ENCODE measurements at regions of chr19 and their contacts with region 1.

Region 1: DNA sequence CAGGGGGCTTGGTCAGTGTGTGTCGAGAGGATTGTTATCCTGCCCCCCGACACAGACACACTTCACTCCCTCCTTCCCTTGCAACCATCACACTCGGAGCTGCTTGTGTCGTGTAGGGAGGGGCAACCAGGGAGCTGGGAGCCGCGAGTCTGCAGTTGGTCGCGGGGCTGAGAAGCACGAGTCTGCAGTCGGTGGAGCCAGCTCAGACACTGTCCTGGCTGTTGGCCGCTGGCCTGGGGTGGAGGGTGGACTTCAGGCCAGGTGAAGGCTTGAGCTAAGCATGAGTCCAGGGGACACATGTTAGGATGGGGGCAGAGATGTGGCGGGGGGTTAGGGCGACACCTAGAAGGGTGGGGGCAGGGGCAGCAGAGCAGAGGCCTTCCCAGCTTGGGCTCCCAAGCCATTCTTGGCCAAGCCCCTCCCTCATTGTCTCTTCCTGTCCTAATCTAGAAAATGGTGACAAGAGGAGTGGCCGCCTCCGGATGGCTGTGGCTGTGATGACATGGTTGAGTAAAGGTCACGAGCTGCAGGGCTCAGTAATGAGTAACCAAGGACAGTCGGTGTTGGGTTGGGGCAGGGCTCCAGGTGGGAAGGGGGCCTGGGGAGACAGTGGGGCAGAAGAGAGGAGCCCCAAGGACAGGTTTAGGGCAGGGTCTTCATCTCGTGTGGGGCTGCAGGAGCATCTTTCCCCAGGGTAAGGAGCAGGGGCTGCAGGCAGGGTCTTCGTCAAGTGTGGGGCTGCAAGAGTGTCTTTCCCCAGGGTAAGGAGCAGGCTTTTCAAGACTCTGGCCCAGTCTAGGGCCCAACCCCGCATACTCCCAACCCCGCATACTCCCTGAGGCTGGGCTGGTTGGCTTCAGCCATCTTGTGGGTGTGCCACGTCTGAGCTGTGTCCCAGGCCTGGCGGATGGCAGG is 8.6 kb downstream of the PPP5C start:
- DNase-seq: peak in 1 of 2 experiments; percentile 21
- ATAC-seq: peak in 1 of 2 experiments; percentile 31; a peak in 3 of 6 replicates
- H3K4me3 ChIP-seq: no peak overlapping the region
- H3K27ac ChIP-seq: peak overlapping the region in 1 of 2 experiments; percentile 45; a peak in 3 of 6 replicates
- H3K4me1 ChIP-seq: peaks cover 44% of the 10 kb centered on the region
- CTCF ChIP-seq: no peak
- EP300 ChIP-seq: no peak
- POLR2A ChIP-seq: no peak
- RAD21 ChIP-seq: no peak

Region 2: DNA sequence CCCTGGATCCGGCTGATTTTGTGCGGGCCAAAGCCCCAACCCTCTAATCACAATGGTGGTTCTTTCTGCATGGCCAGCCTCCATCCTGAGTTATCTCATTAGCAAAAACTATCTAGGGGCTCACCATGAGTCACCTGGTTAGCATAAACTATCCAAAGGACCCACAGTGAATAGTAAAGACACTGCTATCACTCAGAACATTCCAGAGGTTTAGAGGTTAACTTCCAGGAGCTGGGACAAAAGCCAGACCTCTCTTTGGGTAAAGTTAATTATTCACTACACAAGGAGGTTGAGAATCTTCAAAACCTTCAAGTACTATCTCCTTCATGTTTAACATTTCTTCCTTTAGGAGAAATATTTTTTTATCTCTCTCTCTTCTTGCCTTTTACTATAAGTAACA is 27.4 kb before region 1 on chr19:
- CTCF ChIA-PET with region 1: no interaction called
- POLR2A ChIA-PET with region 1: no interaction called
- DNase-seq: no peak
- ATAC-seq: 0 out of 6 replicates have a peak, but pooled peaks of 1 of the 2 experiments have one; percentile 30
- H3K4me3 ChIP-seq: no peak overlapping the region
- H3K27ac ChIP-seq: no peak overlapping the region
- H3K4me1 ChIP-seq: no peaks in the 10 kb centered on the region
- CTCF ChIP-seq: no peak
- EP300 ChIP-seq: no peak
- POLR2A ChIP-seq: no peak
- RAD21 ChIP-seq: no peak

Region 3: GRCh38 chr19:46368116-46368515 is 12.6 kb after region 1 on chr19:
- CTCF ChIA-PET with region 1: interaction called, 45 read pairs
- POLR2A ChIA-PET with region 1: no interaction called
- DNase-seq: no peak
- ATAC-seq: no peak
- H3K4me3 ChIP-seq: no peak overlapping the region
- H3K27ac ChIP-seq: no peak overlapping the region
- H3K4me1 ChIP-seq: peaks cover 22% of the 10 kb centered on the region
- CTCF ChIP-seq: no peak
- EP300 ChIP-seq: no peak
- POLR2A ChIP-seq: no peak
- RAD21 ChIP-seq: no peak

Region 4: GRCh38 chr19:46373421-46374359 is 18.2 kb after region 1 on chr19:
- CTCF ChIA-PET with region 1: interaction called, 45 read pairs
- POLR2A ChIA-PET with region 1: no interaction called
- DNase-seq: peak; percentile 88 to 93
- ATAC-seq: peak; percentile 80 to 87
- H3K4me3 ChIP-seq: peak overlapping the region; percentile 21; the same call in 2 of the 3 replicates
- H3K27ac ChIP-seq: peak overlapping the region; percentile 90 to 94
- H3K4me1 ChIP-seq: peaks cover 49% of the 10 kb centered on the region
- CTCF ChIP-seq: peak; percentile 19; the same call in 1 of the 3 replicates
- EP300 ChIP-seq: peak in 1 of 2 experiments; percentile 6; a peak in 1 of 5 replicates
- POLR2A ChIP-seq: peak; percentile 21
- RAD21 ChIP-seq: no peak; a peak in 1 of 5 replicates

Measured in A549 (cell line).